ENCODE measurements at regions of chr3 and their contacts with region 1.

Region 1: DNA sequence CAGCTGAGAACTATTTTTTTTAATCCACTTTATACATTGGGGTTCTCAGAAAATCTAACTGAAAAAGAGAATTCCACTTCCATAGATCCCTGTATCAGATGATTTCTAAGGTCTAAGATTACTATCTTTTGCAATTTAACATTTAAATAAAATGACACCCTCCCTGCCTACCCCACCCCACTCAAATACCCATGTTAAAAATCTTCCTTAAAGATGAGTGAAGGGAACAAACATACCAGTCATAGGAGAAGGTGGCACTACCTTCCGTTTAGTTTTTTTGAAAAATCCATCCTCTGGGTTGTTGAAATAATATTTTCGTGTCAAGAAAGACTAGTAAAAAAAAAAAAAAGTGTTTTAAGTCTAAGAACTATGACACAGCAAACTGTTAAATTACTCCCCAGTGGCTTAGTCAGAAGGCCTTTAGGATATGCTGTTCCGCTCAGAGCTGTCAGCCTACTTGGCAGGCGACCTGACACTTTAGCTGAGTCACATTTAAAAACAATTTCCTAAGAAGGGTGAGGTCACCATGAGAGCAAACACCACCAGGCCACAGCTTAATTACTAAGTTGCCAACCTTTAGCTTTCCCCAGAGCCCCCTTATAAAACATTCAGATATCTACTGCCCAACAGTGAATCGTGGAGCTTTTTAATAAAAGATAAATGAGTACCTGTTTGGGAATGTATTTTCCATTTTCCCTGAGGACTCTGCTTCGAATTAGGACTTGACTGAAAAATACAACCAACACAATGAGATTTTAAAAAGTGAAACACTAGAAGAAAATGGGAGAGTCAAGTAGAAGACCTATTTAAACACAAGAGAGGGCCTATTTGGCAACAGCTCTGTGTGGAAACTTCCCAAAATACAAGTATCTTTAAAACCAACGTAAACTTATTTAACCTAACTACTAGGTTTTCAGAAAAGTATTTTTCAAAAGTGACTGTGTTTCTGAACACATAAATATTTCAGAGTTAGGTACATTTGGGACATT is 9.6 kb downstream of the EMC3 start:
- DNase-seq: peak; percentile 52

Region 2: GRCh38 chr3:9590282-9590791 is 386.7 kb before region 1 on chr3:
- CTCF ChIA-PET with region 1: no interaction called
- POLR2A ChIA-PET with region 1: no interaction called
- DNase-seq: no peak

Region 3: DNA sequence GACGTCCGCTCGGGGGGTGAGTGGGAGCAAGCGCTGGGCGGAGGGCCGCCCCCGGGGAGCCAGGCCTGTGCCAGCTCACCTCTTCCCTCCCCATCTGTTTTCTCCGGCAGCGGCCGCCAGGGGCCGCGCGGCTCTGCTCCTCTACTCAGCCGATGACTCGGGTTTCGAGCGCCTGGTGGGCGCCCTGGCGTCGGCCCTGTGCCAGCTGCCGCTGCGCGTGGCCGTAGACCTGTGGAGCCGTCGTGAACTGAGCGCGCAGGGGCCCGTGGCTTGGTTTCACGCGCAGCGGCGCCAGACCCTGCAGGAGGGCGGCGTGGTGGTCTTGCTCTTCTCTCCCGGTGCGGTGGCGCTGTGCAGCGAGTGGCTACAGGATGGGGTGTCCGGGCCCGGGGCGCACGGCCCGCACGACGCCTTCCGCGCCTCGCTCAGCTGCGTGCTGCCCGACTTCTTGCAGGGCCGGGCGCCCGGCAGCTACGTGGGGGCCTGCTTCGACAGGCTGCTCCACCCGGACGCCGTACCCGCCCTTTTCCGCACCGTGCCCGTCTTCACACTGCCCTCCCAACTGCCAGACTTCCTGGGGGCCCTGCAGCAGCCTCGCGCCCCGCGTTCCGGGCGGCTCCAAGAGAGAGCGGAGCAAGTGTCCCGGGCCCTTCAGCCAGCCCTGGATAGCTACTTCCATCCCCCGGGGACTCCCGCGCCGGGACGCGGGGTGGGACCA is 44.0 kb before region 1 on chr3:
- CTCF ChIA-PET with region 1: interaction called, 12 read pairs
- POLR2A ChIA-PET with region 1: no interaction called
- DNase-seq: peak; percentile 79

Region 4: DNA sequence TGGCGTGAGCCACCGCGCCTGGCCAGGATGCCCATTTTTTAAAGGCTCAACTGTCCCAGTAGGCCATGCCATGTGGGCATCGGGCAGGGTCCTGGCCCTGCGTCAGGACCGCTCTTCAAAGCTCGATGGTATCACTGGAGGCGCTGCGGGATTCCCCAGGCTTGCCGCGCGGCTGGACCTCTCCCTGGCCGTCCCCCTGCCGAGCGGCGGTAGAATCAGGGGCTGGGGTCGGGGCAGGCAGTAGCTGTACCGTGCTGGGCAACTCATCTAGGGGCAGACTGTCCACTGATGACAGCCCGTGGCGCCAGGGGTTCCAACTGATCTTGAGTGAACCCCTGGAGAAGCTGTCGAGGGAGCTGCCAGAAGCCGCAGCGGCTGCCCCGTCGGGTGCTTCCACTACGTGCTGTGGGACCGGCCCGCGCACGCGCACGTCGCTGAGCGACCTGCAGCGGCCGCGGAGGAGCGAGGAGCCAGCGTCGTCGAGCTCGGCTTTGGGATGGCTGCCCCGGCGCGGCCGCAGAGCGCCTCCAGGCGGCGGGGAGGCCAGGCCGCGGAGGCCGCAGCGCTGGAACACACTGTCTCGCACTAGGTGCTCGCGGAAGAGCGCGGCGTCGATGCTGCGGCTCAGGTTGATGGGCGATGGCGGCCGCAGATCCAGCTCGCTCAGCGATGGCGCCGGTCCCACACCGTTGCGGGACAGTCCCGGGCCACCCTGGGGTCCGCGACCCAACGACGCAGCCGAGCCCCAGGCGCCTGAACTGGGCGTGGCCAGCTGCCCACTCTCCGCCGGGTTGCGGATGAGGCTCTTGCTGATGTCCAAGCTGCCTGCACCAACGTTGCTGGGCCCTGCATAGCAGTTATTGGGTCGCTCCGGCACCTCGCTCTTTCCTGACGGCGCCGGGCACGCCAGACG is 30.6 kb before region 1 on chr3:
- CTCF ChIA-PET with region 1: no interaction called
- POLR2A ChIA-PET with region 1: interaction called, 13 read pairs
- DNase-seq: peak; percentile 94

Region 5: GRCh38 chr3:10015461-10015904 is 38.5 kb after region 1 on chr3:
- CTCF ChIA-PET with region 1: interaction called, 15 read pairs
- POLR2A ChIA-PET with region 1: no interaction called
- DNase-seq: no peak